Activated naive CD4-positive, alpha-beta T cell treated with anti-CD3 and anti-CD28 coated beads for 36 hours (primary cell): ENCODE measurements at regions of chr2 and their contacts with region 1.

Region 1: DNA sequence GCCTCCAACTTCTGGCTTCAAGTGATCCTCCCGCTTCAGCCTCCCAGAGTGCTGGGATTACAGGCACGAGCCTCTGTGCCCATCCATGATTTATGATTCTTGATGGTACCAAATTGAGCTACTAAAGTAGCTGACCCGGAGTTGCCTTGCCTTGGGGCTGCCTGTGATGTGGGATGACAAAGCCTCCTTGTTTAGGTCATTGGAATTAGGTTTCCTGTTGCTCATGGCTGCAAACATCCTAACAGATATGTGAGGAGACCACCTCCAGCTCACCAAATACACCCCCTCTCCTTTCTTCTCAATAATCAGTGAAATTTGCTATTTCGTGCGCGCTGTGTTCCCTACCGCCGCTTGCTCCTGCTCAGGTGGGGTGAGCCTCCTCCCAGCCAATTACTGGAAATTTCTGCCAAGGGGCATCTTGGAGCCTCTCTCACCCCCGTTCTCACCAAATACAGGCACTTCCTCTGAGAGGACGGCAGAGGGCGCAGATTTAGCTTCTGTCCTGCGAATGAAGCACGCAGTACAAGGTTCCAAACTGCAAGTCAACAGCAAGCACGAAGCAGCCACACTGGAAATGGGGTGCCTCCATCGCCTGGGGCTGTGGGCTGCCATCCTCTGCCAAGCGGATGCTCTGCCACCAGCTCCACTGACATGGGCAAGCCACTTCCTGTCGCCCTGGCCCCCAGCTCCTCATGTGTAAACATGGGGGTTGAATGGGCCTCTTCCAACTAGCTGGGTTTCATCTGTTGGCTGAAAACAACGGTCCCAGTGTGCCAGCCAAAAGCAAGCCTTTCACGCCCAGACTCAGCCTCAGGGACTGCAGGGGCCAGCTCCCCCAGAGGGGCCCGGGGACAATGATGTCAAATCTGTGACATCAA is 71.7 kb downstream of the NCAPH start:
- DNase-seq: peak; percentile 81
- H3K4me3 Mint-ChIP-seq: no peak overlapping the region
- H3K27ac Mint-ChIP-seq: peak overlapping the region; percentile 71
- H3K4me1 Mint-ChIP-seq: peaks cover 27% of the 10 kb centered on the region
- H3K27me3 Mint-ChIP-seq: no peaks in the 10 kb centered on the region

Region 2: DNA sequence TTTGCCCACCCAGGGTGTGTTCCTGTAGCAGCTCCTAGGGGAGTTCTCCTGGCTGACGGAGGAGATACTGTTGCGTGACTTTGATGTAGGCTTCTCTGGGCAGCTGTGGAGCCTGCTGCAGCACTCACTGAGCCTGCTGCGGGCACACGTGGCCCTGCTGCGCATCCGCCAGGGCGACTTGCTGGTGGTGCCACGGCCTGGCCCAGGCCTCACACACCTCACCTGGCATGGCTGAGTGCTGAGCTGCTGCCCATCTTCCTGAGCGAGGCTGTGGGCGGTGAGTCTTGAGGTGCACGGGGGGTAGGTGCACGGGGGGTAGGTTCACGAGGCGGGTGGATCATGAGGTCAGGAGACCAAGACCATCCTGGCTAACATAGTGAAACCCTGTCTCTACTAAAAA is 607.4 kb before region 1 on chr2:
- CTCF ChIA-PET with region 1: no interaction called
- intact Hi-C with region 1: no loop called
- DNase-seq: no peak
- H3K4me3 Mint-ChIP-seq: no peak overlapping the region
- H3K27ac Mint-ChIP-seq: no peak overlapping the region
- H3K4me1 Mint-ChIP-seq: no peaks in the 10 kb centered on the region
- H3K27me3 Mint-ChIP-seq: no peaks in the 10 kb centered on the region

Region 3: DNA sequence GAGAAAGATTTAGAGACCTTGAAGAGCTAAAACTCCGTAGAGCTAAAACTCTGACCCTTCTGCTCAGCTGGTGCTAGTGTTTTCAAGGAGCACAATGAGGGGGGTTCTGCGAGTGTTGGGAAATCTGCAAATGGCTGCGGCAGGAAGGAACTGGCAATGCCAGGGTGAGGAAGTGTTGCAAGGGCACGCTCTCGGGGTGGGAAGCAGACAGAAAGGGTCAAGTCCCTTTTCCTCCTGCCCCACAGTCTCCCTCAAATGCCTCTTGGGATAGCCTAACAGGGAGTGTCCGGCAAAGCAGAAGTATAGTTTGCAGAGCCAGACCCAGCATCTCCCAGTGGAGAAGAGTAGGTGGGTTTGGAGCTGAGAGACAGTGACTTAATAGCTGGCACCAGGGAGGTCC is 11.2 kb before region 1 on chr2:
- CTCF ChIA-PET with region 1: interaction called, 13 read pairs
- intact Hi-C with region 1: no loop called
- DNase-seq: no peak
- H3K4me3 Mint-ChIP-seq: no peak overlapping the region
- H3K27ac Mint-ChIP-seq: no peak overlapping the region
- H3K4me1 Mint-ChIP-seq: no peaks in the 10 kb centered on the region
- H3K27me3 Mint-ChIP-seq: no peaks in the 10 kb centered on the region

Region 4: GRCh38 chr2:96470636-96471035 is 63.4 kb after region 1 on chr2:
- CTCF ChIA-PET with region 1: interaction called, 5 read pairs
- intact Hi-C with region 1: loop called (anchors 5 kb)
- DNase-seq: peak; percentile 64
- H3K4me3 Mint-ChIP-seq: no peak overlapping the region
- H3K27ac Mint-ChIP-seq: no peak overlapping the region
- H3K4me1 Mint-ChIP-seq: peaks cover 7% of the 10 kb centered on the region
- H3K27me3 Mint-ChIP-seq: peaks cover 7% of the 10 kb centered on the region

Region 5: DNA sequence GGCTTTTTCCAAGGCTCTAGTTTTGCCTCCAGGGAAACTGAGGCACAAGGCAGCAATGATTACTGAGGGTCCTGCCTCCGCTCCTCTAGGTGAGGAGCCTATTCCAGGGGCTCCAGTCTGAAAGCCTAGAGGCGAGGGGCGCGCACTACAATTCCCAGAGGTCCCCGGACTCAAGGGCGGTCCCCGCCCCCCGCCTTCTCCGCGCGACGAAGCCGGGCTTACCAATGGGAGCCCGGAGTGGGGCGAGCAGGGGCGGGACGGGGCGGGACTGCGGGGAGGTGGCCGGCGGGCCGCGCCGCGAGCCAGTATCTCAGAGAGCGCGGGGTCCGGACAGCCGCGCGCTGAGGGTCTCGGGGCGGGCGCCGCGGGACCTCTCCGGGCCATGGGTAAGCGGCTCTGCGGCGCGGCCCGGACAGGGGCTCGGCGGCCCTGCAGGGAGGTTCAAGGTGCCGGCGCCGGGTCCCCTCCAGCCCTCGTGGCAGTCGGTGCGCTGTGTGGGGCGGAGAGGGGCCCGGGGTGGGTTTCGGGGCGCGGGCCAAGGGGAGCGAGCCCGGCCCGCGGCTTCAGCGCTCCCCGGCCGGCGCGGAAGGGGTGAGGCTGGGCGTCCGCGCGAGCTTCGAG is 129.3 kb after region 1 on chr2 and contains the start of gene ARID5A:
- CTCF ChIA-PET with region 1: interaction called, 16 read pairs
- intact Hi-C with region 1: no loop called
- DNase-seq: peak; percentile 96
- H3K4me3 Mint-ChIP-seq: peak within 1 kb of the TSS; percentile 96
- H3K27ac Mint-ChIP-seq: peak within 1 kb of the TSS; percentile 99
- H3K4me1 Mint-ChIP-seq: peaks cover 60% of the 10 kb centered on the region
- H3K27me3 Mint-ChIP-seq: no peaks in the 10 kb centered on the region
- total RNA-seq, gene ARID5A: 349 to 351 TPM

Region 6: DNA sequence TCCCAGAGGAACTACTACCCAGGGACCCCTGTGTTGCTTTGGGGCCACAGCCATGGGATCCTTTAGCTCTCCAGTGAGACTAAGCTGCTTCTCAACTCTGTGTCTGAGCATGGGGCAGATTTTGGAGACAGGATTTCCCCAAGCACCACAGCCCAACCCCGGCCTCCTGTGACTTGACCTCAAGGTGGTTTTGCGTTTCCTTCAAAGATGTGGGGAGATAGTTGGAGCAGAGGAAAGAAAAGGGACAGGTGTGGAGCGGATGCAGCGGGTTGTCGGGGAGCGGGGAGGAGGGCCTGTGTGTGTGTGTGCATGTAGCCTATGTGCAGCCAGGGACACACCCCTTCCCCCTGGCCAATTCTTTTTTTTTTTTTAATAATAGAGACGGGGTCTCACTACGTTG is 139.5 kb after region 1 on chr2:
- CTCF ChIA-PET with region 1: no interaction called
- intact Hi-C with region 1: no loop called
- DNase-seq: no peak
- H3K4me3 Mint-ChIP-seq: no peak overlapping the region
- H3K27ac Mint-ChIP-seq: peak overlapping the region; percentile 88
- H3K4me1 Mint-ChIP-seq: peaks cover 59% of the 10 kb centered on the region
- H3K27me3 Mint-ChIP-seq: no peaks in the 10 kb centered on the region

Region 7: GRCh38 chr2:96801005-96801785 is 393.9 kb after region 1 on chr2:
- CTCF ChIA-PET with region 1: no interaction called
- intact Hi-C with region 1: loop called (anchors 5 kb)
- DNase-seq: peak; percentile 83
- H3K4me3 Mint-ChIP-seq: no peak overlapping the region
- H3K27ac Mint-ChIP-seq: no peak overlapping the region
- H3K4me1 Mint-ChIP-seq: peaks cover 2% of the 10 kb centered on the region
- H3K27me3 Mint-ChIP-seq: no peaks in the 10 kb centered on the region